Dendritic cell treated with granulocyte-macrophage colony-stimulating factor and Interleukin-4, amounts not matched to agents 40 ng/mL and 50 ng/mL, for 4 days (primary cell): ENCODE measurements at regions of chr9 and their contacts with region 1.

Region 1: GRCh38 chr9:17802249-17802857 is 223.5 kb downstream of the SH3GL2 start:
- H3K4me3 Mint-ChIP-seq: no peak overlapping the region
- H3K27ac Mint-ChIP-seq: no peak overlapping the region
- H3K4me1 Mint-ChIP-seq: no peaks in the 10 kb centered on the region
- H3K27me3 Mint-ChIP-seq: no peaks in the 10 kb centered on the region

Region 2: DNA sequence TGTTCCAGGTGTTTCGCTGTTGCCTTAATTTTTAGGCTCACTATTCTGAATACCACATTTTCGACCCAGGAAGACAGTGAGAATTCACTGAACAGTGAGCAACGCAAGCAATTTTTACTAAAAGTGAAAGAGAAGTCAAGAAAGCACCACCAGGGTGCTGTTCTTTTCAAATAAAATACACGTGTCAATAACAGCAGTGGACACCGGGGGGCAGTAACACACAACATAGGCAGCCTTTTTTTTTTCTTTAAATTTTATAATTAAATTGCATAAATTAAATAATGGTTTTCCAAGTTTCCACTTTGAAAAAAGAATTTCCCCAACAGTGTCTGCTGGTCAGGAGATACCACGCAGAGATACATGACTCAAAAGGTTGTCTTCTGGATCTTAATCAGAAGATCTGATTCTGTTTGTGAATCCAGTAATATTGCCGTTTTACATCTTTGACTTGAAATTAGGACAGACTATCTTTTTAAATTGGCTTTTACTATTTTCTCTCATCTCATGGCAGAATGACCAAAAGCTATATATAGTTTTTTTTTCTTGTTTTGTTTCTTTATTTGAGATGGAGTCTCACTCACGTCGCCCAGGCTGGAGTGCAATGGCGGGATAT is 270.6 kb before region 1 on chr9:
- intact Hi-C with region 1: loop called (anchors 5 kb)
- H3K4me3 Mint-ChIP-seq: peak overlapping the region; percentile 30
- H3K27ac Mint-ChIP-seq: no peak overlapping the region
- H3K4me1 Mint-ChIP-seq: peaks cover 6% of the 10 kb centered on the region
- H3K27me3 Mint-ChIP-seq: peaks cover 3% of the 10 kb centered on the region

Region 3: DNA sequence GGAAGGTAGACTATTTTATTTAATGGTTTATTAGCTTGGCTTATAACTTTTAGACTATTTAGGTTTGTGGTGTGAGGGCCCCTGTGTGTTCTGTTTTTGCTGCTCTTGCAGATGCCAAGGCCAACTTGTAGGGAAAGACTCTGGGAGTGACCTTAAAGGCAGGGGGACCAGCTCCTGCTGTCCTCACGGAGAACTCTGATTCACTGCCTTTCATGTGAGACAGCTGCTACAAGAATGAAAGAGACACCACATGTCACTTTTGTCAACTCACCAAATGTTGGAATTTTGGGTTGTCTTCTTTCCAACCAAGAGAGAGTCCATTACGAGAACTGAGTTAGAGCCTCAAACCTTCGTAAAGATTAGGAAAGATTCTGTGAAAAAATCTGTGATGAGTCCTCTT is 413.3 kb after region 1 on chr9:
- intact Hi-C with region 1: loop called (anchors 10 kb)
- H3K4me3 Mint-ChIP-seq: no peak overlapping the region
- H3K27ac Mint-ChIP-seq: no peak overlapping the region
- H3K4me1 Mint-ChIP-seq: no peaks in the 10 kb centered on the region
- H3K27me3 Mint-ChIP-seq: no peaks in the 10 kb centered on the region